ENCODE measurements at regions of chr10 and their contacts with region 1.

Region 1: DNA sequence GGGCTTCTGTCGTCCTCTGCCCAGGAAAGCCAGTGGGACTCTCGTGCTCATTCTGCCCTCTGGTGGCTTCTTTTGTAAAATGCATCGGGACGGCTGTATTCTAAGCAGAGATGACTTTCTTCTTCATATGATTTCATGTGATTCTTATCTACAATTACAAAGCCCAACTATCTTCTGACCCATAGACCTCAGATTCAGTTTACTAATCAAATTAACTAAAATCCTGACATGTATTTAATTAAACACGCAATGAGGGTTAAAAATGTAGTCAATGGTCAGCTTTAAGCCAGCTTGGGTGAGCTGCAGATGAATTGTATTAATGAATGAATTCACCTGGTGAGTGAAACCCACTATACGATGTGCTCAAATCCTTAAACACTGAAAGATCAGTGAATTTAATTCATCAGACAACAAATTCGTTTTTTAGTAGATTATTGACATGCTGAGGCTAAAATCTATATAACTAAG is 117.6 kb upstream of the FAM204A start:
- DNase-seq: peak; percentile 83
- H3K27ac ChIP-seq: no peak overlapping the region
- CTCF ChIP-seq: peak; percentile 90

Region 2: GRCh38 chr10:117496616-117497028 is 963.1 kb before region 1 on chr10:
- CTCF ChIA-PET with region 1: interaction called, 10 read pairs
- POLR2A ChIA-PET with region 1: no interaction called
- DNase-seq: peak; percentile 81
- H3K27ac ChIP-seq: no peak overlapping the region
- CTCF ChIP-seq: peak; percentile 94

Region 3: DNA sequence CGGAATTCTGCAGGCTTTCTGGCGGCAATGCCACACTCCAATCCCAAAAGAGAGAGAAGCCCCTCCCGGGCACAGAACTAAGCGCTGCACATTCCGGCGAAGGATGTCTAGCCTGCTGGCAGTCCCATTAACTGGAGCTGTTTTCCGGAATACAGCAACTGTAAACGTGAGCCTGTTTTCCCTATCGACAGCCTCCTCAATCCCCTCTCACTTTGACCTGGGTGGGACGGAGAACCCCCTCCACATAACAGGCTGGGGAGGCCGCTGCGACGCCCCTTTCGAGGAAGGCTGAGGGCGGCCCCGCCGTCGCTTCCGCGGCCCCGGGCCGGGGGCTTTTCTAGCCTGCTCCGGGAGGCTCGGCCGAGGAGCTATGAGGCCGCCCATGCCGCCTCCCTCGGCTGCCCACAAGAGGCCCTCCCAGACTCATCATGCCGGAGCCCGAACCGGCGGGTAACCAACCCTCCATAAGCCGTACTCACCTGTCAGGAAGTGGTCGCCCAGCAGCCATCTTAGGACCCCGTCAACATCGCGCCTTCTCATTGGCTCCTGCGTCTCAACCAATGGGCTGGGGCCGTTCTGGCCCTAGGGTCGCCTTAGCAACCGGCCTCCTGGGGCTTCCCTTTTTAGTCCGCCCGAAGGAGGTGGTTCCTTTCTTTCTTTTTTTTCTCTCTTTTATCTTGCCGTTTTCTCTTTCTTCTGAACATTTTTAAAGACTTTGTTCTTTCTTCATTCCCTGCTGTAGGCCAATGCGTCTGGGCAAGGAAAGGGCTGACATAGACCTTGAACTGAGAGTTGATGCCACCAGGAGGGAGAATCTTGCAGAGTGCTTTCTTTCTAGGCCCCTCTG is 117.7 kb before region 1 on chr10 and contains the start of gene FAM204A:
- CTCF ChIA-PET with region 1: no interaction called
- POLR2A ChIA-PET with region 1: no interaction called
- DNase-seq: peak; percentile 100
- H3K27ac ChIP-seq: peak within 1 kb of the TSS; percentile 76
- CTCF ChIP-seq: no peak

Region 4: GRCh38 chr10:118447478-118448270 is 12.1 kb before region 1 on chr10:
- CTCF ChIA-PET with region 1: interaction called, 13 read pairs
- POLR2A ChIA-PET with region 1: no interaction called
- DNase-seq: peak; percentile 21
- H3K27ac ChIP-seq: no peak overlapping the region
- CTCF ChIP-seq: no peak

Region 5: GRCh38 chr10:118471863-118472262 is 12.1 kb after region 1 on chr10:
- CTCF ChIA-PET with region 1: interaction called, 16 read pairs
- POLR2A ChIA-PET with region 1: no interaction called
- DNase-seq: peak; percentile 31
- H3K27ac ChIP-seq: no peak overlapping the region
- CTCF ChIP-seq: no peak

Region 6: DNA sequence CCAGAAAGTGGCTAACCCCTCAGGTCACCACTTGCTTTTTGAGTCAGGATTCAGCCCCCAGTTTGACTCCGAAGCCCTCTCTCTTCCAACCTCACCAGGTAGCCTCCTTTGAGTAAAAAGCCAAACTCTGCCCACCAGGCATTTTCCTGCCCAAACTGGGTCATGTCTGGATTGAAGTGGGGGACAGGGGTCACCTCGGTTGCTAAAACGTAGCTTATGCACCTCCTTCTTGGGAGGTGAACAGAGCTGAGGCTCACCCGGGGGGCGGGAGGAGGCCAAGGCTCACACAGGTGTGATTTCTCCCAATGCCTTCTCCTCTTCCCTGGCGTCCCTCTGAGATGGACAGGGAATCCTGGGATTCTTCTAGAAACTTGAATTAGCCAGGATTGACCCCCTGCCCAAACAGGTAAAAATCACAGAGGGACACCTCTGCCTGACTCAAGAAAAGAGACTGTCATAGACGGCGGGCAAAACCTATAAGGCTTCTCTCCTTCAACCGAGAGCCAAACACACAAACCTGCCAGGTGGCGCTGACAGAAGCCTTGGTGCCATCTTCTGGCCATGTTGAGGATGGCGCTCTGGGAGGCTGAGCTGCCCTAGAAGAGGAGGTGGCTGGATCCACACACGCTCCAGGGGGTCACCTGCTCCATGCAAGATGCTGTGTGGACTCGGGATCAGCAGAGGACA is 84.1 kb after region 1 on chr10:
- CTCF ChIA-PET with region 1: interaction called, 44 read pairs
- POLR2A ChIA-PET with region 1: no interaction called
- DNase-seq: peak; percentile 90
- H3K27ac ChIP-seq: no peak overlapping the region
- CTCF ChIP-seq: peak; percentile 87